ENCODE measurements at regions of chr17 and their contacts with region 1.

Region 1: GRCh38 chr17:43393944-43394482 is 4.8 kb upstream of the ARL4D start:
- DNase-seq: no peak
- ATAC-seq: peak; percentile 78
- H3K4me3 ChIP-seq: no peak overlapping the region
- H3K27ac ChIP-seq: no peak overlapping the region
- H3K4me1 ChIP-seq: peaks cover 4% of the 10 kb centered on the region
- H3K27me3 ChIP-seq: no peaks in the 10 kb centered on the region
- CTCF ChIP-seq: peak; percentile 81 to 89 (median 86)
- EP300 ChIP-seq: no peak
- POLR2A ChIP-seq: no peak
- RAD21 ChIP-seq: peak; percentile 95

Region 2: DNA sequence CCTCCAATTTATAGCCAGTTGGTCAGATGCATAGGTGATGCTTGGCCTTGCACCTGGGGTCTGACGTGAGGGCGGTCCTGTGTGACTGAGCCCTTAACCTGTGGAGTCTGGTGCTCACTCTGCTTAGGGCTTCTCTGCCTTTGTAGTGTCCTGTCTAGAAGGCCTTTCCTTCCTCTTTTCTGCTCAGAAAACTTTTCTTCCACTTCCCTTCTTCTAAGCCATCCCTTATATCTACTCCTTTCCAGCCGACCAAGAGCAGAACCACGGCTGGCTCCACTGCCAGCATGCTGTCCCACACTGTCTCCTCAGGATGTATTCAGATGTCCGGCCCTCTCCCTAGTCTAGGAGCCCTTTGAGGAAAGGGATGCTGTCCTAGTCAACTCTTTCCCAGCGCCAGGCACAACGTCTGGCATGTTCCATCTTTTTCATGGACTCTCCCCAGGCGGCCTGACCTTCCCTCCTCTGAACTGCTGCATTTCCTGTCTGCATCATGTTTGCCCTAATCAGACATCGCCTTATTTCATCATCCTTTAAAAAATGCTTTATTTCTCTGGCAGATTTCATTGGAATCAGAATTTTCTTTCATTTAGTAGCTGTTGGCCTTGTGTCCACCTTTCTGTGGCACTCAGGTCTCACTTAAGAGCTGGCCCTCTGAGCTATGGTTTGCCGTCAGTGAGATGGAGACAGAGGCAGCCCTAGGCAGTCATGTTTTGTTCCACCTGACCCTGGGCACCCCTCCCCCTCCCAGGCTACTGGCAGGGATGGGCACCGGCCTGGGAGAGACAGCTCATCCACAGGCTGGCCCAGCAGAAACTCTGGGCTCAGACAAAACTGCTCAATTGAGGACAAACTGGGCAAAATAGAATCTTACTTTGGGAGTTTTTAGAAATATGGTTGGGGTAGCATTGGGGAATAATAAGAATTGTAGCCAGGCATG is 253.3 kb before region 1 on chr17:
- CTCF ChIA-PET with region 1: no interaction called
- POLR2A ChIA-PET with region 1: no interaction called
- RAD21 ChIA-PET with region 1: no interaction called
- SMC1A ChIA-PET with region 1: no interaction called
- in situ Hi-C with region 1: no loop called
- intact Hi-C with region 1: no loop called
- DNase-seq: no peak
- ATAC-seq: no peak
- H3K4me3 ChIP-seq: no peak overlapping the region
- H3K27ac ChIP-seq: no peak overlapping the region
- H3K4me1 ChIP-seq: no peaks in the 10 kb centered on the region
- H3K27me3 ChIP-seq: no peaks in the 10 kb centered on the region
- CTCF ChIP-seq: no peak
- EP300 ChIP-seq: no peak
- POLR2A ChIP-seq: no peak
- RAD21 ChIP-seq: no peak

Region 3: GRCh38 chr17:43367737-43368242 is 26.2 kb before region 1 on chr17:
- CTCF ChIA-PET with region 1: interaction called, 52 read pairs
- POLR2A ChIA-PET with region 1: interaction called, 49 read pairs
- RAD21 ChIA-PET with region 1: interaction called, 13 read pairs
- SMC1A ChIA-PET with region 1: interaction called, 20 read pairs
- in situ Hi-C with region 1: no loop called
- intact Hi-C with region 1: no loop called
- DNase-seq: peak; percentile 91
- ATAC-seq: peak; percentile 67
- H3K4me3 ChIP-seq: peak overlapping the region; percentile 62; the same call in 1 of the 2 replicates
- H3K27ac ChIP-seq: peak overlapping the region; percentile 99
- H3K4me1 ChIP-seq: peaks cover 44% of the 10 kb centered on the region
- H3K27me3 ChIP-seq: no peaks in the 10 kb centered on the region
- CTCF ChIP-seq: no peak
- EP300 ChIP-seq: no peak
- POLR2A ChIP-seq: peak; percentile 99
- RAD21 ChIP-seq: no peak

Region 4: DNA sequence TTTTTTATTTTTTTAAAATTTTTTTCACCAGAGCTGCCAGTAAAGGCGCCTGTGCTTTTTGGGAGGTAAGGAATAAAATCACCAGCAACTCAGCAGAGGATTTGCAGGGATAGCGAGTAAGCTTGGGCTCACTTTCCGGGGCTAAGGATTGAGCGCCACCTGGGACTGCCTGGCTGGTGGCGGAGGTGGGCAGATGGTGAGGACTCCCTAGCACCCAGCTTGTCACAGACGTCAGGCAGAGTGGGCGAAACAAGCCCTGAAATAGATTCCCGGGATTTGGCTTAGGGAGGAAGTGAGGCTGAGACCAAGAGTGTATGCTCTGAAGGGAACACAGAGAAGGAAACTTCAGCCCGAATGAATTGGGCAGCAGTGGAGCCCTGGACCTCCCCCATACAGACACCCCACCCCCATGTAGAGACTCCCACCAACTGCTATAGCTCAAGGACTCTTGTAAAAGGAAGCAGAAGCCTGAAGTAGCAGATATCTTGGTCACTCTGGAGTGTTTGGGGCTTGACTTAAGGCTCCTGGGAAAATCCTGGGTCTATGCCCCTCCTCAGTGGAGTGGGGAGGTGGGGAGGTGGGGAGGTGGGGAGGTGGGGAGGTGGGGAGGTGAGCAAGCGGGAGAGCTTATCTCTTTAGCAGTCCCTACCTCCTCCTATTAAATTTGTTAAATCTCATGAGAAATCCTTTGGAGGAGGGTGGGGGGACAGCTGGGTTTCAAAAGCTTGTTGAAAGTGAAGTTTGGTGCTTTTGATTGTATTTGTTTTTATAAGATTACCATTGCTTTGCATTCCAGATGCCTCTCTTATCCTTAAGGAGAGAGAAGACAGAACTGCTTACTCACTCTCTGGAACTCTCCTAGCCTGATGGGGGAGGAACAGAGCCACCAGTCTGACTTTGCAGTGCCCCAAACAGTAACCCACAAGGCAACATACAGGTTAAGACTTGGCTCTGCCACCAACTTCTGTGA is 12.9 kb after region 1 on chr17:
- CTCF ChIA-PET with region 1: interaction called, 14 read pairs
- POLR2A ChIA-PET with region 1: no interaction called
- RAD21 ChIA-PET with region 1: no interaction called
- SMC1A ChIA-PET with region 1: no interaction called
- in situ Hi-C with region 1: no loop called
- intact Hi-C with region 1: no loop called
- DNase-seq: no peak
- ATAC-seq: no peak
- H3K4me3 ChIP-seq: no peak overlapping the region
- H3K27ac ChIP-seq: no peak overlapping the region
- H3K4me1 ChIP-seq: peaks cover 4% of the 10 kb centered on the region
- H3K27me3 ChIP-seq: no peaks in the 10 kb centered on the region; a peak in 2 of 4 replicates
- CTCF ChIP-seq: no peak
- EP300 ChIP-seq: no peak
- POLR2A ChIP-seq: no peak
- RAD21 ChIP-seq: no peak

Region 5: GRCh38 chr17:43477832-43478634 is 84.0 kb after region 1 on chr17:
- CTCF ChIA-PET with region 1: interaction called, 248 read pairs
- POLR2A ChIA-PET with region 1: interaction called, 7 read pairs
- RAD21 ChIA-PET with region 1: interaction called, 79 read pairs
- SMC1A ChIA-PET with region 1: interaction called, 117 read pairs
- in situ Hi-C with region 1: loop called (anchors 5 kb)
- intact Hi-C with region 1: loop called (anchors 1 kb)
- DNase-seq: no peak
- ATAC-seq: no peak
- H3K4me3 ChIP-seq: no peak overlapping the region
- H3K27ac ChIP-seq: no peak overlapping the region
- H3K4me1 ChIP-seq: peaks cover 2% of the 10 kb centered on the region; the same call in 1 of the 2 replicates
- H3K27me3 ChIP-seq: no peaks in the 10 kb centered on the region
- CTCF ChIP-seq: no peak
- EP300 ChIP-seq: no peak
- POLR2A ChIP-seq: no peak
- RAD21 ChIP-seq: no peak

Region 6: GRCh38 chr17:43652124-43652480 is 258.1 kb after region 1 on chr17:
- CTCF ChIA-PET with region 1: no interaction called
- POLR2A ChIA-PET with region 1: no interaction called
- RAD21 ChIA-PET with region 1: no interaction called
- SMC1A ChIA-PET with region 1: no interaction called
- in situ Hi-C with region 1: no loop called
- intact Hi-C with region 1: no loop called
- DNase-seq: no peak
- ATAC-seq: no peak
- H3K4me3 ChIP-seq: no peak overlapping the region
- H3K27ac ChIP-seq: no peak overlapping the region
- H3K4me1 ChIP-seq: peaks cover 8% of the 10 kb centered on the region
- H3K27me3 ChIP-seq: no peaks in the 10 kb centered on the region
- CTCF ChIP-seq: no peak
- EP300 ChIP-seq: no peak
- POLR2A ChIP-seq: no peak
- RAD21 ChIP-seq: no peak

Region 7: GRCh38 chr17:43760254-43760852 is 366.3 kb after region 1 on chr17:
- CTCF ChIA-PET with region 1: interaction called, 4 read pairs
- POLR2A ChIA-PET with region 1: no interaction called
- RAD21 ChIA-PET with region 1: no interaction called
- SMC1A ChIA-PET with region 1: no interaction called
- in situ Hi-C with region 1: no loop called
- intact Hi-C with region 1: loop called (anchors 5 kb)
- DNase-seq: peak; percentile 53
- ATAC-seq: peak; percentile 96
- H3K4me3 ChIP-seq: no peak overlapping the region
- H3K27ac ChIP-seq: no peak overlapping the region
- H3K4me1 ChIP-seq: no peaks in the 10 kb centered on the region
- H3K27me3 ChIP-seq: peaks cover 5 to 6% of the 10 kb centered on the region in 2 experiments
- CTCF ChIP-seq: peak; percentile 95 to 100 (median 100); a peak in 5 of 6 replicates
- EP300 ChIP-seq: no peak
- POLR2A ChIP-seq: no peak
- RAD21 ChIP-seq: peak; percentile 96

Measured in GM12878 (cell line).